Activated CD4-positive, alpha-beta memory T cell treated with anti-CD3 and anti-CD28 coated beads, Interleukin-2, amount 10 ng/mL, durations not matched to agents 7 days and 5 days (primary cell): ENCODE measurements at regions of chr10 and their contacts with region 1.

Region 1: GRCh38 chr10:60208676-60209269 is 180.9 kb downstream of the ANK3 start:
- DNase-seq: no peak
- H3K4me3 Mint-ChIP-seq: no peak overlapping the region
- H3K27ac Mint-ChIP-seq: no peak overlapping the region
- H3K4me1 Mint-ChIP-seq: peaks cover 28% of the 10 kb centered on the region
- H3K27me3 Mint-ChIP-seq: no peaks in the 10 kb centered on the region

Region 2: GRCh38 chr10:60114765-60115586 is 93.8 kb before region 1 on chr10:
- CTCF ChIA-PET with region 1: interaction called, 43 read pairs
- POLR2A ChIA-PET with region 1: no interaction called
- DNase-seq: no peak
- H3K4me3 Mint-ChIP-seq: no peak overlapping the region
- H3K27ac Mint-ChIP-seq: no peak overlapping the region
- H3K4me1 Mint-ChIP-seq: no peaks in the 10 kb centered on the region
- H3K27me3 Mint-ChIP-seq: no peaks in the 10 kb centered on the region

Region 3: DNA sequence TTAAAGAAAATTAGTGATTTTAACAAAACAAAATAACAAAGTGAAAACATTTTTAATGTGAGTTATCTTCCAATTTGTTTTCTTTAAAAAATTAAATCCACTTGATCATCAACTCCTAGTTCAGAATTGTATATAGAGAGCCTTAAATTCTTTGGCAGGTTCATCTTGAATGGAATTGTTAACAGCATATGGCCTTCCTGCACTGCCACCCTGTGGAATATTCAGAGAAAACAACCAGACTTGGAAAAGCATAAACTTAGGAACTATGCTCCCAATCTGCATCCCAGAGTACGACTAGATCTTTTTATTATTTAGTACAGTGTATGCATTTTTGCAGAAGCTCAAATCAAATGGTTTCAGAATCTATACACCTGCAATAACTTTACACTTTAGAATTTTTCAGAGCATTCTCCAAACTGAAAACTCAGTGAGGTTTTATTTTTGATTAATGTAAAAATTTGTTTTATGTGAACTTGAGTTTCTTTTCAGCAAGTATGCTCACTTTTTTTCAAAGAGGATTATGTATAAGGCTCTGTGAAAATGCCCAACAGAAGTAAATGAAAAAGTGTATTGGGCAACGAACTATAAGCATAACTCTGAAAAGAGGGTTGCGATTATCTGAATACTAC is 225.8 kb after region 1 on chr10:
- CTCF ChIA-PET with region 1: interaction called, 16 read pairs
- POLR2A ChIA-PET with region 1: no interaction called
- DNase-seq: no peak
- H3K4me3 Mint-ChIP-seq: no peak overlapping the region
- H3K27ac Mint-ChIP-seq: no peak overlapping the region
- H3K4me1 Mint-ChIP-seq: no peaks in the 10 kb centered on the region
- H3K27me3 Mint-ChIP-seq: no peaks in the 10 kb centered on the region